ENCODE measurements at regions of chr11 and their contacts with region 1.

Region 1: GRCh38 chr11:17389211-17389956 is 925 bp upstream of the KCNJ11 start:
- DNase-seq: peak; percentile 83

Region 2: DNA sequence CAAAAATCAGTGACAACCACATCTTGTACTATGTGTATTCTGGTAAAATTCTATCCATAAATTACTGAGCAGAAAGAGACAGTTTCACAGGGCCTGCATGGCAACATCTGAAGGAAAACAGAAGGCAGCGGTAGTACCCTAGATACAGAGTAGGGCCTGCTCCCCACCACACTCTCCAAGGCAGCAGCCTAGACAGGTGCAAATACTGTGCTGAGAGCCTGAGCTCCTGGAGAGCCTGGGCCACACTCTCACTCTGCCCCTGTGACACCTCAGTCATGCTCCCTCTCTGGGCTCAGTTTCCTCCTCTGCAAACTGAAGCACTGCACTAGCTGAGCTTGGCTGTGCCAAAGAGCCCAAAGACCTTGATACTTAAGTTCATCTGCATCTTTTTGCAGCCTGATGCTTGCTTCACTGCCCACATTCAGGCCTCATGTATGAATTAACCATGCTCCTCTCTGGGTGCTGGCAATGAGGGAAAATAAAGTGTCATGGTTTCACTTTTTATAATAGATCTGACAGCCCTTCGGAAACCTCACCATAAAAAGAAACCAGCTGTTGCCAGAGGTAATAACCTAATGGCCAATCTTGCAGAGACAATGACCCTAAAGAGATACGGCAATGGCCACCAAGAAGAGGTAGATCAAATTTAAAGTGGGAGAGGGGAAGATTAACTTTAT is 479.9 kb before region 1 on chr11:
- intact Hi-C with region 1: no loop called
- DNase-seq: no peak

Region 3: GRCh38 chr11:17459236-17459896 is 70.0 kb after region 1 on chr11:
- intact Hi-C with region 1: no loop called
- DNase-seq: no peak

Region 4: DNA sequence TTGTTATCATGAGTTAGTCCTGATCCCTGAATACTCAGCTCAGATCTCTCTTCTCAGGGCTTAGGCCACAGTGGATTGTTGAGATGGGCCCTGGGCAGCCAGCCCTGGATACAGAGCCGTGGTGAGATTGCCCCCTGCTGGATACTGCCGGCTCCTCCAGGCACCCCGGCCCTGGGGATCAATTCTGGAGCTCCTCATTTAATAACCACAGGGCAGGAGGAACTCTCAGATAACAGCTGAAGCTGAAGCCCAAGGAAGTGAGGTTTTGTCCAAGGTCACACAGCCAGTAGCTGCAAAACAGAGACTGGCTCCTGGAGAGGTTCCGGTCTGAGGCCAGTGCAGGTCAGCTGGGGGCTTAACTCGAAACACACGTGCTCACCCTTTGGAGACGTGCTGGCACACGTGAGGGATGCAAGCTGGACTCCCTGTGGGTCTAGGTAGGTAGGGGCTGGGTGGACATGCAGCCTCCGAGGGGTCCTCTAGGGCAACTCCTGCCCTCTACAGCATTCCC is 138.9 kb after region 1 on chr11:
- intact Hi-C with region 1: loop called (anchors 5 kb)
- DNase-seq: no peak

Measured in cardiac septum (tissue), 1 donor.